CD8-positive, alpha-beta T cell (primary cell): ENCODE measurements at regions of chr17 and their contacts with region 1.

Region 1: DNA sequence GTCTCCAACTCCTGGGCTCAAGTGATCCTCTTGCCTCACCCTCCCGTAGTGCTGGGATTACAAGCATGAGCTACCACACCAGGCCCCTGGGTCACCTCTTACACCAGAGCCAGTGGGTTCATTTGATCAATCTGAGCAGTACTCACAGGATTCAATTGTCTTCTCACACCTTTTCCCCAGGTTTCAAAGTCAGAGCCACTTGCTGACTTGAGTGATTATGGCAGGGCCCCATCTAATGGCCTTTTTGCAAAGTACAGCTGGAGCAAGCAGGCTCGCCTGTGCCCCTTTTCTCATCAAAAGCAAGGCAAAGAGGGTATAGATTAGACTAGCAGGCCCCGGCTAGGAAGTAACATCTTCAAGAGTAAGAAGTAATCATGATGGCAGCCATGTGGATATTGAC is 114.8 kb upstream of the NOL11 start:
- DNase-seq: peak; percentile 8 to 73 (median 51)
- ATAC-seq: peak; percentile 97
- H3K4me3 ChIP-seq: no peak overlapping the region
- H3K4me3 Mint-ChIP-seq: no peak overlapping the region
- H3K27ac ChIP-seq: no peak overlapping the region
- H3K27ac Mint-ChIP-seq: peak overlapping the region; percentile 29
- H3K4me1 ChIP-seq: no peaks in the 10 kb centered on the region
- H3K4me1 Mint-ChIP-seq: peaks cover 34% of the 10 kb centered on the region
- H3K27me3 ChIP-seq: no peaks in the 10 kb centered on the region
- H3K27me3 Mint-ChIP-seq: no peaks in the 10 kb centered on the region
- CTCF ChIP-seq: peak; percentile 52

Region 2: DNA sequence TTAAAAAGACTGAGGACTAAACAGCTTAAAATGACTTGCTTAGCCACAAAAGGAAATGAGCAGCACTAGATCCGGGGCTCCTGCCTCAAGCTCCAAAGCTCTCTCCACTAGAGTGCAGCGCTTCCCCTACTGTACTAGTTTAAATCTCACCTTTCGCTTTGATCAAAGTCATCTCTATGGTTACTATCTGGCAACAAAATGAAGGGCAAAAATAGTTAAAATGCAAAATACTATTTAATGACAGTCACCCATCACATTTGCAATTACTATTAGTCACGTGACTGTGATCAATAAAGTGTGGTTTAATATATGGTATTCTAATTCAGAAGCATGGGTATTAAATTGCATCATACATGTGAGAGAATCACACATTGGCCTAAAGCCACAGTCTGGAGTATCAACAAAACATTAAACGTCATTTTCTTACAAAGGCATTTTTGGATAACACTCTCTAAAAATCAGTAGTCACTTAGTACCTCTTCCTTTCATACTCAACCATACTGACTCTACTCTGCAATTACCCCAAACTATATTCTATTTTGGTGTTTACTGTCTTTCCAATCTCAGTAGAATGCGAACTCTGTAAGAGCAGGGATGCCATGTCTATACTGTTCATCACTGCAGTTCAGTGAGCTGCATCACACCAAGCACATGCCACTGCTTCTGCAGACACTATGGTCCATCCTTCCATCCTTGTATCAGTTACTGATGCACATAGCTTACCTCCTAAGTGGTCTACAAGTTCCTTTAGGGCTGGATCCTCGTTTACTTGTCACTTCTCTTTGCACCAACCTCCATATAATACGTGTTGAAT is 242.8 kb before region 1 on chr17:
- CTCF ChIA-PET with region 1: interaction called, 4 read pairs
- POLR2A ChIA-PET with region 1: no interaction called
- intact Hi-C with region 1: loop called in 1 of 2 experiments (anchors 1 kb)
- DNase-seq: peak in 6 of 9 experiments; percentile 26 to 81 (median 62)
- ATAC-seq: peak; percentile 95
- H3K4me3 ChIP-seq: no peak overlapping the region
- H3K4me3 Mint-ChIP-seq: peak overlapping the region; percentile 0
- H3K27ac ChIP-seq: peak overlapping the region; percentile 42 to 46
- H3K27ac Mint-ChIP-seq: peak overlapping the region; percentile 83
- H3K4me1 ChIP-seq: peaks cover 61% of the 10 kb centered on the region
- H3K4me1 Mint-ChIP-seq: peaks cover 65% of the 10 kb centered on the region
- H3K27me3 ChIP-seq: no peaks in the 10 kb centered on the region
- H3K27me3 Mint-ChIP-seq: no peaks in the 10 kb centered on the region
- CTCF ChIP-seq: peak; percentile 63

Region 3: GRCh38 chr17:67481808-67482207 is 121.1 kb before region 1 on chr17:
- CTCF ChIA-PET with region 1: interaction called, 5 read pairs
- POLR2A ChIA-PET with region 1: no interaction called
- intact Hi-C with region 1: loop called (anchors 2 to 5 kb)
- DNase-seq: no peak
- ATAC-seq: no peak
- H3K4me3 ChIP-seq: no peak overlapping the region
- H3K4me3 Mint-ChIP-seq: no peak overlapping the region
- H3K27ac ChIP-seq: no peak overlapping the region
- H3K27ac Mint-ChIP-seq: peak overlapping the region; percentile 57
- H3K4me1 ChIP-seq: peaks cover 43% of the 10 kb centered on the region
- H3K4me1 Mint-ChIP-seq: peaks cover 83% of the 10 kb centered on the region
- H3K27me3 ChIP-seq: no peaks in the 10 kb centered on the region
- H3K27me3 Mint-ChIP-seq: no peaks in the 10 kb centered on the region
- CTCF ChIP-seq: no peak